ENCODE measurements at regions of chr2 and their contacts with region 1.

Region 1: GRCh38 chr2:48107326-48107925 is 201.1 kb upstream of the FBXO11 start:
- DNase-seq: no peak
- H3K4me3 ChIP-seq: peak overlapping the region in 8 of 59 donors; percentile 42 to 58 (median 52)
- H3K27ac ChIP-seq: peak overlapping the region in 46 of 59 donors; percentile 9 to 92 (median 66)
- H3K27me3 ChIP-seq: no peaks in the 10 kb centered on the region
- CTCF ChIP-seq: peak in 1 of 56 donors; percentile 8

Region 2: DNA sequence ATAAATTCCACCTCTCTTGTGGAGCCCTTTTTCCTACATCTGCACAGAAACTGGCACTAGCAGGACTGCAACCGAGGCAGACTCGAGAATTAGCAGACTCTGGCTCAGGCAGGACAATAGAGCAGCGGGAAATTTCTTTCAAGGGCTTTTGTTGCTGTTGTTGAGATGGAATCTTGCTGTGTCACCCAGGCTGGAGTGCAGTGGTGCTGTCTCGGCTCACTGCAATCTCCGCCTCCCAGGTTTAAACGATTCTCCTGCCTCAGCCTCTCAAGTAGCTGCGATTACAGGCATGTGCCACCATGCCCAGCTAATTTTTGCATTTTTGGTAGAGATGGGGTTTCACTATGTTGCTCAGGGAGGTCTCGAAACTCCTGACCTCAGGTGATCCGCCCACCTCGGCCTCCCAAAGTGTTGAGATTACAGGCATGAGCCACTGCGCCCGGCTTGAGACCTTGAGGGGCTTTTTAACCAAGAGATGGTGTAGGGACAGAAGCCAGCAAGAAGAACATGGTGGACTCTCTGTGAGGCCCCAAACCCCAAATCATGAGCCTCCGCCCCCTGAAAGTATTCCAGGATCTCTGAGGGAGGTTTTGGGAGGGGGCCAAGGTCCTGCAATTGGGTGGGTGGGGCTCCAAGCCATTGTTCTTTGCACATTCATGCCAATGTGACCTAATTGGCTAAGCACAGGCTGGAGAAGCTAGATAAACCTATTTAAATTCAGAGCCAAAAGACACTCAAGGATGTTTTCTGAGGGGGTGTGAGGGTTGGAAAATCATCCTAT is 772.9 kb before region 1 on chr2:
- intact Hi-C with region 1: loop called in 1 of 2 experiments (anchors 5 kb)
- DNase-seq: no peak
- H3K4me3 ChIP-seq: no peak overlapping the region
- H3K27ac ChIP-seq: peak overlapping the region in 58 of 59 donors; percentile 14 to 89 (median 78)
- H3K27me3 ChIP-seq: no peaks in the 10 kb centered on the region
- CTCF ChIP-seq: peak in 1 of 56 donors; percentile 6

Region 3: DNA sequence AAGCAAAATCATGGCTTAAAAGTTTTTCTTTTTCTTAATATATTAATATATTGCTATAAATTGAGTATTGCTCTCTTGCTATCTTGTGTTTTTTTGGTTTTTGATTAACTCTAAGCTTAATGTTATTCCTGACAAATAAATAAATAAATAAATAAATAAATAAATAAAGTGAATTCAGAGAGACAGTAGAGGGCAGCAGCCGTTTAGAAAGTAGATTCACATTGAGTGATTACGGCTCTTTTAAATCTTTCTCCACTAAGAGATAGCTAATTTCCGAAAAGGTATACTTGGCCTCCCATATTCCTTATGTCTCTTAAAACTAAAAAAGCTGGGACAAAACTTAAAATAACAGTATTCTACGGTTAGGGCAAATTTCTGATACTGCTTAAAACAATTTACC is 670.1 kb before region 1 on chr2:
- intact Hi-C with region 1: loop called (anchors 10 kb)
- DNase-seq: peak in 1 of 10 donors; percentile 18
- H3K4me3 ChIP-seq: peak overlapping the region in 17 of 59 donors; percentile 1 to 36 (median 18)
- H3K27ac ChIP-seq: peak overlapping the region in 1 of 59 donors; percentile 12
- H3K27me3 ChIP-seq: no peaks in the 10 kb centered on the region
- CTCF ChIP-seq: peak; percentile 13 to 88 (median 67)

Region 4: DNA sequence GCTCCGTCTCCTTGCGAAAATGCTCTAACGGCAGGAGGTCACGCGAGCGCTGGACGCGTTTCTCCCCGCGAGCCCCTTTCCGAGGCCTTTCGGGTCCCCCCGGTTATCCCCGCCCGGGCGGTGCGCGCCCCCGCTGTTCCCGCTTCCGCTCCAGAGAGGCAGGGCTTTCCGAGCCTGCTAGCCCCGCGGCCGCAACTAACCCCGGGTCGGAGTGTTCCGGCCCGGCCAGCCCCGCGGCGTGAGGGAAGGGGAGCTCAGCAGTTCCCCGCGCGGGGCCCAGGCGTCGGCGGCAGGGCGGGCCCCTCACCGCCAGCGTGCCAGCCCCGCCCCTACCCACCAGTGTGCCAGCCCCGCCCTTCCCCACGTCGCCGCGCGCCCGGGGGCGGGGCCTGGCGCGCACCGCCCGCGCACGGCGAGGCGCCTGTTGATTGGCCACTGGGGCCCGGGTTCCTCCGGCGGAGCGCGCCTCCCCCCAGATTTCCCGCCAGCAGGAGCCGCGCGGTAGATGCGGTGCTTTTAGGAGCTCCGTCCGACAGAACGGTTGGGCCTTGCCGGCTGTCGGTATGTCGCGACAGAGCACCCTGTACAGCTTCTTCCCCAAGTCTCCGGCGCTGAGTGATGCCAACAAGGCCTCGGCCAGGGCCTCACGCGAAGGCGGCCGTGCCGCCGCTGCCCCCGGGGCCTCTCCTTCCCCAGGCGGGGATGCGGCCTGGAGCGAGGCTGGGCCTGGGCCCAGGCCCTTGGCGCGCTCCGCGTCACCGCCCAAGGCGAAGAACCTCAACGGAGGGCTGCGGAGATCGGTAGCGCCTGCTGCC is 324.5 kb before region 1 on chr2 and contains the start of gene MSH6:
- intact Hi-C with region 1: loop called (anchors 2 to 5 kb)
- DNase-seq: peak; percentile 79 to 96 (median 90)
- H3K4me3 ChIP-seq: peak within 1 kb of the TSS; percentile 71 to 98 (median 92)
- H3K27ac ChIP-seq: peak within 1 kb of the TSS; percentile 64 to 97 (median 91)
- H3K27me3 ChIP-seq: no peaks in the 10 kb centered on the region
- CTCF ChIP-seq: peak in 26 of 56 donors; percentile 5 to 57 (median 31)
- total RNA-seq, gene MSH6: 21.9 to 64.7 (median 36.1) TPM

Region 5: DNA sequence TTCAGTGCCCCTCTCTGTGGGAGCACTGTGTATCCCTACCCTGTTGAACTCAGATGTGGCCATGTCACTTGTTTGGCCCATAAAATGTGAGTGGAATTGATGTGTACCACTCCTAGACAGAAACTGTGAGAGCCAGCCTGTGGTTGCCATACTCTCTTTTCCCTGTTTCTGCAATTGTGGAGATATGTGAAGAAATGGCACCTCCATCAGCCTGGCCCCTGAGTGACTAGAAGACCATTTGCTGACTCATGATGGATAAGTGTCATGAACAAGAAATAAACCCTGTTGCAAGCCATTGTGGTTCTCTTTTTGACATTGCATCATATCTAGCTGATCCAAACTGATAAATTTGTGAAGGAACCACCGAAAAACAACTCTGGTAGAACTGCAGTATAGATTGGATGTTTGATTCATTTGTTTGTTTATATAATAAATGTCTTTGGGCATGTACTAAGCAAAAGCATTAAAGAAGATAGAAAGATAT is 13.4 kb after region 1 on chr2:
- intact Hi-C with region 1: no loop called
- DNase-seq: no peak
- H3K4me3 ChIP-seq: no peak overlapping the region
- H3K27ac ChIP-seq: no peak overlapping the region
- H3K27me3 ChIP-seq: no peaks in the 10 kb centered on the region
- CTCF ChIP-seq: no peak

Region 6: GRCh38 chr2:48200620-48201293 is 93.3 kb after region 1 on chr2:
- intact Hi-C with region 1: no loop called
- DNase-seq: no peak
- H3K4me3 ChIP-seq: no peak overlapping the region
- H3K27ac ChIP-seq: no peak overlapping the region
- H3K27me3 ChIP-seq: no peaks in the 10 kb centered on the region
- CTCF ChIP-seq: no peak